CD8-positive, alpha-beta T cell (primary cell): ENCODE measurements at regions of chr2 and their contacts with region 1.

Region 1: GRCh38 chr2:38508311-38509039 is 94.3 kb downstream of the HNRNPLL start:
- DNase-seq: peak; percentile 61 to 83 (median 78)
- ATAC-seq: peak; percentile 80
- H3K4me3 ChIP-seq: no peak overlapping the region
- H3K4me3 Mint-ChIP-seq: no peak overlapping the region
- H3K27ac ChIP-seq: no peak overlapping the region
- H3K27ac Mint-ChIP-seq: no peak overlapping the region
- H3K4me1 ChIP-seq: no peaks in the 10 kb centered on the region
- H3K4me1 Mint-ChIP-seq: peaks cover 2% of the 10 kb centered on the region
- H3K27me3 ChIP-seq: no peaks in the 10 kb centered on the region
- H3K27me3 Mint-ChIP-seq: peaks cover 5% of the 10 kb centered on the region
- CTCF ChIP-seq: peak; percentile 75

Region 2: GRCh38 chr2:38115216-38116032 is 393.1 kb before region 1 on chr2:
- CTCF ChIA-PET with region 1: interaction called, 4 read pairs
- POLR2A ChIA-PET with region 1: no interaction called
- intact Hi-C with region 1: loop called in 1 of 2 experiments (anchors 5 kb)
- DNase-seq: peak; percentile 28 to 66 (median 51)
- ATAC-seq: peak; percentile 48
- H3K4me3 ChIP-seq: no peak overlapping the region
- H3K4me3 Mint-ChIP-seq: no peak overlapping the region
- H3K27ac ChIP-seq: no peak overlapping the region
- H3K27ac Mint-ChIP-seq: no peak overlapping the region
- H3K4me1 ChIP-seq: no peaks in the 10 kb centered on the region
- H3K4me1 Mint-ChIP-seq: no peaks in the 10 kb centered on the region
- H3K27me3 ChIP-seq: no peaks in the 10 kb centered on the region
- H3K27me3 Mint-ChIP-seq: peaks cover 24% of the 10 kb centered on the region
- CTCF ChIP-seq: peak; percentile 88

Region 3: DNA sequence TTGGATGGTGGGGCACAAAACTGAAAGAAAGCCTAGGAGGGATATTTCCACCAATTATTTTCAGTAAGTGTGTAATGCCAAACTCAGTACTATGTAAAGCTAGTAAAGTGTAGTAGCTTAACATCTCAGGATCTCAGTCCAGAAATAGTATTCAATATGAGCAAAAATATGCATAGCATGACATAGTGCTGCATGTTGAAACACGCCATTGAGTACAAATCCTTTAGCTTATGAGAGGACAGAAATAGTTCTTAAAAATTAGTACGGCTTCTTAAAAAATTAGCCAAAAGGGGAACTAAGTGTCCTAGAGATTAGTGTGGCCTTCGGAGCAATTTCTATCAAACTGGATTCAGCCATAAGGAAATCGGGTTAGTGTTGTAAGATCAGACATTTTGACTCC is 109.7 kb before region 1 on chr2:
- CTCF ChIA-PET with region 1: no interaction called
- POLR2A ChIA-PET with region 1: no interaction called
- intact Hi-C with region 1: no loop called
- DNase-seq: no peak
- ATAC-seq: no peak
- H3K4me3 ChIP-seq: no peak overlapping the region
- H3K4me3 Mint-ChIP-seq: no peak overlapping the region
- H3K27ac ChIP-seq: no peak overlapping the region
- H3K27ac Mint-ChIP-seq: no peak overlapping the region
- H3K4me1 ChIP-seq: no peaks in the 10 kb centered on the region
- H3K4me1 Mint-ChIP-seq: no peaks in the 10 kb centered on the region
- H3K27me3 ChIP-seq: no peaks in the 10 kb centered on the region
- H3K27me3 Mint-ChIP-seq: no peaks in the 10 kb centered on the region
- CTCF ChIP-seq: no peak

Region 4: GRCh38 chr2:38498045-38498481 is 10.4 kb before region 1 on chr2:
- CTCF ChIA-PET with region 1: interaction called, 11 read pairs
- POLR2A ChIA-PET with region 1: no interaction called
- intact Hi-C with region 1: no loop called
- DNase-seq: no peak
- ATAC-seq: no peak
- H3K4me3 ChIP-seq: no peak overlapping the region
- H3K4me3 Mint-ChIP-seq: no peak overlapping the region
- H3K27ac ChIP-seq: no peak overlapping the region
- H3K27ac Mint-ChIP-seq: no peak overlapping the region
- H3K4me1 ChIP-seq: no peaks in the 10 kb centered on the region
- H3K4me1 Mint-ChIP-seq: peaks cover 6% of the 10 kb centered on the region
- H3K27me3 ChIP-seq: no peaks in the 10 kb centered on the region
- H3K27me3 Mint-ChIP-seq: peaks cover 7% of the 10 kb centered on the region
- CTCF ChIP-seq: no peak